Left ventricle myocardium inferior (tissue), 1 donor: ENCODE measurements at regions of chr11 and their contacts with region 1.

Region 1: GRCh38 chr11:78416305-78417178 is 1.1 kb downstream of the GAB2 start:
- DNase-seq: peak; percentile 85
- H3K4me3 ChIP-seq: peak overlapping the region; percentile 95
- H3K27ac ChIP-seq: peak overlapping the region; percentile 98
- H3K4me1 ChIP-seq: peaks cover 55% of the 10 kb centered on the region
- H3K27me3 ChIP-seq: no peaks in the 10 kb centered on the region
- CTCF ChIP-seq: peak; percentile 55

Region 2: GRCh38 chr11:78202733-78203167 is 213.8 kb before region 1 on chr11:
- intact Hi-C with region 1: no loop called
- DNase-seq: no peak
- H3K4me3 ChIP-seq: no peak overlapping the region
- H3K27ac ChIP-seq: no peak overlapping the region
- H3K4me1 ChIP-seq: peaks cover 18% of the 10 kb centered on the region
- H3K27me3 ChIP-seq: no peaks in the 10 kb centered on the region
- CTCF ChIP-seq: no peak

Region 3: DNA sequence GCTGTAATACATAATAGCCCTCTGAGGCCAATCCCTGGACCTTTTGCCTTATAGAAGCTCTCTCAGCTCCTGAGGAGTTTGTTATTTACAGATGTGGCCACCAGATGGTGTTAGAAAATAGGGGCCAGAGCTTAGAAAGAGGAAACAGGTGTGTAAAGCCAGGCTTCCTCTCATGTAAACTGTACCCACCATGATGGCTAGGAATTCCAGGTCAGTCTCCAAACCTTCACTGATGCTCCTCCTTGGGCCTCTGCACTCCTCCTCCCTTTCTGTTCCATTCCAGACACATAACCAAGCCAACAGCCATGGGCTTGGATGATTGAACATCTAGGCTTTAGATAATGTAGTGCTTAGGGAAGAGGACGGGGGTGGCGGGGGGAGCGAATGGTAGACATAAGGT is 188.1 kb before region 1 on chr11:
- intact Hi-C with region 1: loop called (anchors 5 kb)
- DNase-seq: no peak
- H3K4me3 ChIP-seq: no peak overlapping the region
- H3K27ac ChIP-seq: no peak overlapping the region
- H3K4me1 ChIP-seq: peaks cover 49% of the 10 kb centered on the region
- H3K27me3 ChIP-seq: no peaks in the 10 kb centered on the region
- CTCF ChIP-seq: peak; percentile 75

Region 4: DNA sequence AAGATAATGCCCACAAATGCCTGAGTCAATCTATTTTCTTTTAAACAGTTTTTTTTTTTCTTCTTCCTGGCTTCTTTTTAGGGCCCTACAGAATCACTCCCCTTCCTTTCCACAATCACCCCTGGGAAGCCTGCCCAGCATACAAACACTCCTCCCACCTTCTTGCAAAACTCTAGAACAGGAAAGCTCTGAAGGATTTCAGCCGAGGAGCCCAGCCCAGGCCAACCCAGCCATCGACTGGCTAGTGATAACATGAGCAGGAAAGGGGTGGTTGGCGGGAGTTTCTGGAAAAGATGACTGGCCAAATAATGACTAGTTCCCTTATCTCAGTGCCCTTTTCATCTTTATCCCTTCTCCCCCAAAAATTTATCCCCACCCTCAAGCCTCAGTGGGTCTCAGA is 159.6 kb before region 1 on chr11:
- intact Hi-C with region 1: loop called (anchors 10 kb)
- DNase-seq: peak; percentile 83
- H3K4me3 ChIP-seq: no peak overlapping the region
- H3K27ac ChIP-seq: peak overlapping the region; percentile 65
- H3K4me1 ChIP-seq: peaks cover 60% of the 10 kb centered on the region
- H3K27me3 ChIP-seq: no peaks in the 10 kb centered on the region
- CTCF ChIP-seq: no peak

Region 5: GRCh38 chr11:78564490-78565467 is 148.2 kb after region 1 on chr11:
- intact Hi-C with region 1: loop called (anchors 10 kb)
- DNase-seq: no peak
- H3K4me3 ChIP-seq: no peak overlapping the region
- H3K27ac ChIP-seq: no peak overlapping the region
- H3K4me1 ChIP-seq: peaks cover 32% of the 10 kb centered on the region
- H3K27me3 ChIP-seq: no peaks in the 10 kb centered on the region
- CTCF ChIP-seq: peak; percentile 79

Region 6: DNA sequence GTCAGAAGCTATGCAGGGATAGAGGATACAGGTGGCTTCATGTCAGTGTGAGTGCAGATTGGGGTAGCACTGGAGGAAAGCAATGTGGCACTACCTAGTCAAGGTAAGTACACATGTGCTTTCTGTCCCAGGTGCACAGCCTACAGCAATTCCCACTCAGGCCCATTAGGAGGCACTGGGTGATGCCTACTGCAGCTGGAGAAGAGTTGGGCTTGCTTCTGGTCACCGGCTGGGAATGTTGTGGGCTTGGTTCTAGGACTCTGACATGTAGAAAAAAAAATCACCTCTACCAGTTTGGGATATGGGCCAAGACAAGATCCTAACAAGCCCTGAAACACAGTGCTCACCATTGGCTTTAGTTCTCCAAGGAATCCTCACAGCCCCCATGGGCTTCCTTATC is 954.6 kb after region 1 on chr11:
- intact Hi-C with region 1: no loop called
- DNase-seq: no peak
- H3K4me3 ChIP-seq: no peak overlapping the region
- H3K27ac ChIP-seq: no peak overlapping the region
- H3K4me1 ChIP-seq: no peaks in the 10 kb centered on the region
- H3K27me3 ChIP-seq: peaks cover 34% of the 10 kb centered on the region
- CTCF ChIP-seq: no peak